ENCODE measurements at regions of chr12 and their contacts with region 1.

Region 1: GRCh38 chr12:40010899-40011774 is 94.7 kb downstream of the SLC2A13 start:
- DNase-seq: peak; percentile 35
- ATAC-seq: peak; percentile 97
- H3K4me3 ChIP-seq: no peak overlapping the region
- H3K27ac ChIP-seq: no peak overlapping the region
- H3K4me1 ChIP-seq: no peaks in the 10 kb centered on the region
- H3K27me3 ChIP-seq: no peaks in the 10 kb centered on the region
- CTCF ChIP-seq: peak; percentile 67 to 85 (median 79)
- EP300 ChIP-seq: no peak
- POLR2A ChIP-seq: no peak
- RAD21 ChIP-seq: peak; percentile 71

Region 2: GRCh38 chr12:39931857-39932256 is 79.3 kb before region 1 on chr12:
- CTCF ChIA-PET with region 1: no interaction called
- POLR2A ChIA-PET with region 1: no interaction called
- RAD21 ChIA-PET with region 1: no interaction called
- SMC1A ChIA-PET with region 1: no interaction called
- in situ Hi-C with region 1: no loop called
- intact Hi-C with region 1: no loop called
- DNase-seq: no peak
- ATAC-seq: no peak
- H3K4me3 ChIP-seq: no peak overlapping the region
- H3K27ac ChIP-seq: no peak overlapping the region
- H3K4me1 ChIP-seq: no peaks in the 10 kb centered on the region
- H3K27me3 ChIP-seq: no peaks in the 10 kb centered on the region
- CTCF ChIP-seq: no peak
- EP300 ChIP-seq: no peak
- POLR2A ChIP-seq: no peak
- RAD21 ChIP-seq: no peak

Region 3: GRCh38 chr12:39971348-39971747 is 39.8 kb before region 1 on chr12:
- CTCF ChIA-PET with region 1: no interaction called
- POLR2A ChIA-PET with region 1: no interaction called
- RAD21 ChIA-PET with region 1: no interaction called
- SMC1A ChIA-PET with region 1: no interaction called
- in situ Hi-C with region 1: no loop called
- intact Hi-C with region 1: no loop called
- DNase-seq: no peak
- ATAC-seq: no peak
- H3K4me3 ChIP-seq: no peak overlapping the region
- H3K27ac ChIP-seq: no peak overlapping the region
- H3K4me1 ChIP-seq: no peaks in the 10 kb centered on the region
- H3K27me3 ChIP-seq: no peaks in the 10 kb centered on the region
- CTCF ChIP-seq: no peak
- EP300 ChIP-seq: no peak
- POLR2A ChIP-seq: no peak
- RAD21 ChIP-seq: no peak

Region 4: GRCh38 chr12:39990122-39991101 is 20.7 kb before region 1 on chr12:
- CTCF ChIA-PET with region 1: interaction called, 9 read pairs
- POLR2A ChIA-PET with region 1: interaction called, 3 read pairs
- RAD21 ChIA-PET with region 1: interaction called, 3 read pairs
- SMC1A ChIA-PET with region 1: interaction called, 11 read pairs
- in situ Hi-C with region 1: no loop called
- intact Hi-C with region 1: no loop called
- DNase-seq: peak; percentile 9
- ATAC-seq: peak; percentile 98
- H3K4me3 ChIP-seq: no peak overlapping the region
- H3K27ac ChIP-seq: no peak overlapping the region
- H3K4me1 ChIP-seq: no peaks in the 10 kb centered on the region
- H3K27me3 ChIP-seq: no peaks in the 10 kb centered on the region
- CTCF ChIP-seq: peak; percentile 78 to 86 (median 82)
- EP300 ChIP-seq: no peak
- POLR2A ChIP-seq: no peak
- RAD21 ChIP-seq: peak; percentile 68

Region 5: DNA sequence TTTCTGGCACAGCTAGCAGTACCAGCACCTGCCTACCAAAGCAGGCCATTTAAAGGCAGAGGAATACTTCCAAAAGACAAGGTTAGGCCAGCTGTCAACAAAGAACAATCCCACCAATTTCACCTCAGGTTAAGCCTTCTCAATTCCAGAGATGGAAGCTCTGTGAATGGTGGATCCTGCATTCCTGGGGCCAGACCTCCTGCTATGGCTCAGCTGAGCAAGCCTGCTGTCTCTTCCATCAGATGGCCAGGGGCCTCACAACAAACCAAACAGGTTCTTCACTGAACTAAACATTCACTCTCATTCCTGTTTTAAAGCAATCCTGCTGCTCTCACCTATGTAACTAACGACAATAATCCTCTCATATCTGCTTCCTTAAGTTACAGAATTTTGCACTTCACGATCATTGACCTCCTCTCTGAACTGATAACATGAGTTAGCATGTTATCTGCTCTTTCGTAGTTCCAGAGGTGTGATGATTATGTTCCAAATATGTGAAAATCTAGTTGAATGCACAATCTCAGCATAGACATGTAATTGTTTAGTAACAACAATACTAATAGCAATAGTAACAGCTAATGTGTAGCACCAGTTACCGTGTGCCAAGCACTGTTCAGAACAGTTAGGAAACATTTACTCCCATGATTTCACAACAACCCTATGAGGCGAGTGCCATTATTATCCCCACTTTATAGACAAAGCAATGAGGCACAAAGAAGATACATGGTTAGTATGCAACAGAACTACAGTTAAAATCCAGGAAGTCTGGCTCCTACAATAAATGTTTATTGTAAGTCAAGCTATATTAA is 21.5 kb after region 1 on chr12:
- CTCF ChIA-PET with region 1: interaction called, 36 read pairs
- POLR2A ChIA-PET with region 1: no interaction called
- RAD21 ChIA-PET with region 1: interaction called, 7 read pairs
- SMC1A ChIA-PET with region 1: interaction called, 12 read pairs
- in situ Hi-C with region 1: no loop called
- intact Hi-C with region 1: no loop called
- DNase-seq: no peak
- ATAC-seq: 0 out of 3 replicates have a peak, but pooled peaks have one; percentile 18
- H3K4me3 ChIP-seq: no peak overlapping the region
- H3K27ac ChIP-seq: no peak overlapping the region
- H3K4me1 ChIP-seq: no peaks in the 10 kb centered on the region
- H3K27me3 ChIP-seq: no peaks in the 10 kb centered on the region
- CTCF ChIP-seq: no peak
- EP300 ChIP-seq: no peak
- POLR2A ChIP-seq: no peak
- RAD21 ChIP-seq: no peak

Region 6: GRCh38 chr12:40086471-40086870 is 75.3 kb after region 1 on chr12:
- CTCF ChIA-PET with region 1: interaction called, 18 read pairs
- POLR2A ChIA-PET with region 1: no interaction called
- RAD21 ChIA-PET with region 1: interaction called, 4 read pairs
- SMC1A ChIA-PET with region 1: interaction called, 3 read pairs
- in situ Hi-C with region 1: no loop called
- intact Hi-C with region 1: no loop called
- DNase-seq: no peak
- ATAC-seq: no peak
- H3K4me3 ChIP-seq: no peak overlapping the region
- H3K27ac ChIP-seq: no peak overlapping the region
- H3K4me1 ChIP-seq: no peaks in the 10 kb centered on the region
- H3K27me3 ChIP-seq: no peaks in the 10 kb centered on the region
- CTCF ChIP-seq: no peak
- EP300 ChIP-seq: no peak
- POLR2A ChIP-seq: no peak
- RAD21 ChIP-seq: no peak